Left colon (tissue), 2 donors: ENCODE measurements at regions of chr15 and their contacts with region 1.

Region 1: GRCh38 chr15:83011271-83012075 is at the start of gene C15orf40:
- DNase-seq: peak; percentile 90 to 92
- ATAC-seq: peak; percentile 98
- total RNA-seq, gene C15orf40: 22.4 to 22.7 TPM

Region 2: GRCh38 chr15:82530606-82531379 is 480.7 kb before region 1 on chr15:
- intact Hi-C with region 1: loop called in 1 of 2 experiments (anchors 10 kb)
- DNase-seq: peak; percentile 80 to 85
- ATAC-seq: peak; percentile 93